ENCODE measurements at regions of chr17 and their contacts with region 1.

Region 1: GRCh38 chr17:39538866-39539265 is 68.9 kb downstream of the NEUROD2 start:
- DNase-seq: no peak
- H3K4me3 ChIP-seq: no peak overlapping the region
- H3K27me3 ChIP-seq: no peaks in the 10 kb centered on the region
- CTCF ChIP-seq: no peak

Region 2: GRCh38 chr17:39335704-39336223 is 203.1 kb before region 1 on chr17:
- CTCF ChIA-PET with region 1: no interaction called
- POLR2A ChIA-PET with region 1: interaction called, 12 read pairs
- DNase-seq: no peak
- H3K4me3 ChIP-seq: no peak overlapping the region
- H3K27me3 ChIP-seq: no peaks in the 10 kb centered on the region
- CTCF ChIP-seq: no peak

Region 3: GRCh38 chr17:39939588-39940419 is 400.9 kb after region 1 on chr17:
- CTCF ChIA-PET with region 1: no interaction called
- POLR2A ChIA-PET with region 1: no interaction called
- DNase-seq: peak; percentile 76
- H3K4me3 ChIP-seq: no peak overlapping the region
- H3K27me3 ChIP-seq: no peaks in the 10 kb centered on the region; the same call in 1 of the 2 replicates
- CTCF ChIP-seq: peak; percentile 72